ENCODE measurements at regions of chr11 and their contacts with region 1.

Region 1: DNA sequence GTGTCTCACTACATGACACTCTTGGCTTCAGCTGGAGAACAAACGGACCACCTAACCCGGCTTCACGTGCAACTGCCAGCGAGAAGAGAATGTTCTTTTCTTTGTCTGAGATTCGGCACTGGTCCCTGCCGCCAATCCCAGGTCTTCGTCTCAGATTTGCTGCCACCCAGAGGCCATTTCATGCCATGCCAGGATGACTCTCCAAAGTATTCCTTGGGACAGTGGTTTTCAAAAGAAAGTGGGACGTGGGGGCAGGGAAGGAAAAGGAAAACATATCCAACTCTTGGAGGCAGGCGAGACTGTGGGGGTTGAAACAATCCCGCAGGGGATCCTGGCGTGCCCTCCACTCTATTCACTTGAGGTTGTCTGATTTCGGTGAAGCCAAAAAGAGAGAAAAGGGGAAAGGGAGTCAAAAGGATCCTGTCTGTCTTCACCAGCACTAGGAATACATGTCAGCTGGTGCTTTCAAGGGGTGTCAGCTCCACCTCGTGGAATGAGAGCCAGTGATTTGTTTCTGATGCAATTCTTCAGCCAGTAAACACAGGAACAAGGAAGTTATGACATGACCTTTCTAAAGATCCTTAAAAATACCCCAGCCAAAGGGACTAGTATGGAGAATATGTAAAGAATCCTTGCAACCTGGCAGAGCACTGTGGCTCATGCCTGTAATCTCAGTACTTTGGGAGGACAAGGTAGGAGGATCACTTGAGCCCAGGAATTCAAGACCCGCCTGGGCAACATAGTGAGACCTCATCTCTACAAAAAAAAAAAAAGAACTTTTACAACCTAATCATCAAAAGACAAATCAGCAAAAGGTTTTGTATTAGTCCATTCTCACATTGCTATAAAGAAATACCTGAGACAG is 41.0 kb upstream of the APLNR start:
- H3K4me3 ChIP-seq: no peak overlapping the region
- H3K27ac ChIP-seq: no peak overlapping the region
- H3K4me1 ChIP-seq: no peaks in the 10 kb centered on the region
- CTCF ChIP-seq: peak; percentile 48

Region 2: DNA sequence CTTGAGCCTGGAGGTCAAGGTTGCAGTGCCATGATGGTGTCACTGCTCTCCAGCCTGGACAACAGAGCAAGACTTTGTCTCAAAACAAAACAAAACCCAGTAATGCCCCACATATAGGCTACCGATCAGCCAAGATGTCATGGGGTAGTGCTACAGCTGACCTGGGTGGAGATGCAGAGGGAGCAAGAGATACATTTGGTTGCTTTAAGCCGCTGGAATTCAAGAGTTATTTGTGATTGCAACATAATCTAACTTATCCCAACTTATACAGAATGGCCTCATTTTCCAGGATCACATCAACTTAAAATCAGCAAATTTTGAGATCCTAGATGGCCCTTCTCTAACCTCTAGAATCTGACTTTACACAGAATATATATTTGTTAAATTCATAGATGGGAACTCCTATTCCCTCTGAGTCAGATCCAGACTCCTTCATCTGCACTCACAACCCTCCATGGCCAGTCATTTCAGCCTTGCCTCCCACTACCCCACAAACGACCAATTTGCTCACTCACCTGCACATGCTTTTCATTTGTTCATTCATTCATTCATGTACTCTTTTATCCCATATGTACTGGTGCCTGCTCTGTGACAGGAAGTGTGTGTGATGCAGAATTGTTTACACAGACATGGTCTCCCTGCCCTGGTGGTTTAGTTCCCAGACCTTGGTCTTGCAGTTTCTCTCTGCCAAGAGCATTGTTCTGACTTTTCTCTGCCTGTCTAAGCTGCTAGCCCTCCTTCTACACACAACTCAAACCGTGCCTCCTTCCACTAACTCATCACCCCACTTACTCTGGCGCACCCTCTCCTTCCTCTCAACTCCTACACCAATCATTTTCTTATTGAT is 16.9 kb before region 1 on chr11:
- CTCF ChIA-PET with region 1: interaction called, 11 read pairs
- POLR2A ChIA-PET with region 1: no interaction called
- H3K4me3 ChIP-seq: no peak overlapping the region
- H3K27ac ChIP-seq: no peak overlapping the region
- H3K4me1 ChIP-seq: no peaks in the 10 kb centered on the region
- CTCF ChIP-seq: no peak

Region 3: DNA sequence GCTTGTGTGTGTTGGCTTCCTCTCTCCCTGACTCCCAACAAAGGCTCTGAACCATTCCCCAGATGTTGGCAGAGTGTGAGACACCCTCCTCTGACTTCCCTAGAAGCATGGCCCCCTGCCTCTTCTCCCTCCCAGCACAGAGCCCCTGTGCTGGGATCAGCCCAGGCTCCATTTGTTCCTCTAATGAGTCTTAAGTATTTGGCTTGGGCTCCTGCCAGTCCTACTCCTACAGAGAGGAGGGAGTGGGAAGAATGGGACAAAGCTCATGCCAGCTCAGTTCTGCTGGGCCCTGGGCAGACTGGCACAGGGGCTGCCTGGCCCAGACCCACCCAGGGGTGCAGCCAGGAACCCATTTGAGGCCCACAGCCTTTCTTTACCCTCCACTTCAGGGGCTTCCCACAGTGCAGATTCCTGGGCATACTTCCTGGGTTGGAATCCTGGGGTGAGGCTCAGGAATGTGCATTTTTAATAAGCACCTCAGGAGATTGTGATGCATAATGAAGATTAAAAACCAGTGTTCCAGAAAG is 16.6 kb after region 1 on chr11:
- CTCF ChIA-PET with region 1: interaction called, 20 read pairs
- POLR2A ChIA-PET with region 1: no interaction called
- H3K4me3 ChIP-seq: no peak overlapping the region
- H3K27ac ChIP-seq: no peak overlapping the region
- H3K4me1 ChIP-seq: peaks cover 3% of the 10 kb centered on the region; the same call in 1 of the 2 replicates
- CTCF ChIP-seq: no peak

Measured in HEK293 (cell line).